ENCODE measurements at regions of chrX and their contacts with region 1.

Region 1: DNA sequence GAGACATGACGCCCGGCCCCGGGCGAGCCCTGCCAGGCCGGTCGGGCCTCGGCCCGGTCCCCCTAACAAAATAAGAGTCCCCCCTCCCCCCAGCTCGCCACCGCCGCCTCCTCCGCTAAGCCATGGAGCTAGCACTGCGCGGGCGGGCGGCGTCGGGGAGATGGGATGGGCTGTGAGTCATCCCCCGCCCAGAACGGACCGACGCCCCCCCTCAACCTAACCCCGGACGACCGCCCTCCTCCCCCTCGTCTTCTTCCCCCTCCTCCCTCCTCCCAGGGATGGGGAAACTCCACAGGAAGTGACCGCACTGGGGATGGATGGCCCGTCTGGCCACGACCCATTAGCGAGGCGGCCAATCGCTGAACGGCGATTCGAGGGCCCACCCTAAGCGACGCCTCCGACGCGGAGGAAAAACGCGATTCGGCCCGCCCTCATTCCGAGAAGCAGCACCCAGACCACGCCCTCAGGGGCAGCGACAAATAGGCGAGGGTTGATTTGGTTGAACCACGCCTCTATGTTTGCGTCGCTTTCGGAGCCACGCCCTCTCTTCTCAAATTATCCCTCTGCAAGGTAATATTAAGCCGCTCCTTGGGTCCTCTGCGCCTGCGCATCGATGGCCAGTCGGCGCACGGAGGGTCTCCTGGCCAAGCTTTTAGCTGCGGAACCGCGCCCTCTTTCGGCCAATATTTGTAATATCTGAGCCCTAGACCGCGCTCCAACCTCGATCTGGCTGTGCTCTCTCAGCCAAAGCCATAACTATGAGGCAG is at the start of gene TFE3:
- DNase-seq: peak; percentile 97
- ATAC-seq: peak; percentile 81
- H3K4me3 Mint-ChIP-seq: peak within 1 kb of the TSS; percentile 88
- H3K27ac Mint-ChIP-seq: peak within 1 kb of the TSS; percentile 97
- H3K4me1 Mint-ChIP-seq: peaks cover 29% of the 10 kb centered on the region
- H3K27me3 Mint-ChIP-seq: no peaks in the 10 kb centered on the region; the same call in 1 of the 2 replicates
- CTCF ChIP-seq: peak; percentile 51
- total RNA-seq, gene TFE3: 46.4 to 51.2 TPM (median 50.0 TPM) in 3 replicates

Region 2: GRCh38 chrX:48957827-48958634 is 85.4 kb before region 1 on chrX:
- CTCF ChIA-PET with region 1: interaction called, 10 read pairs
- POLR2A ChIA-PET with region 1: no interaction called
- DNase-seq: peak; percentile 93
- ATAC-seq: peak; percentile 95
- H3K4me3 Mint-ChIP-seq: peak overlapping the region; percentile 99
- H3K27ac Mint-ChIP-seq: peak overlapping the region; percentile 100
- H3K4me1 Mint-ChIP-seq: peaks cover 11% of the 10 kb centered on the region; the same call in 1 of the 2 replicates
- H3K27me3 Mint-ChIP-seq: no peaks in the 10 kb centered on the region
- CTCF ChIP-seq: no peak

Region 3: DNA sequence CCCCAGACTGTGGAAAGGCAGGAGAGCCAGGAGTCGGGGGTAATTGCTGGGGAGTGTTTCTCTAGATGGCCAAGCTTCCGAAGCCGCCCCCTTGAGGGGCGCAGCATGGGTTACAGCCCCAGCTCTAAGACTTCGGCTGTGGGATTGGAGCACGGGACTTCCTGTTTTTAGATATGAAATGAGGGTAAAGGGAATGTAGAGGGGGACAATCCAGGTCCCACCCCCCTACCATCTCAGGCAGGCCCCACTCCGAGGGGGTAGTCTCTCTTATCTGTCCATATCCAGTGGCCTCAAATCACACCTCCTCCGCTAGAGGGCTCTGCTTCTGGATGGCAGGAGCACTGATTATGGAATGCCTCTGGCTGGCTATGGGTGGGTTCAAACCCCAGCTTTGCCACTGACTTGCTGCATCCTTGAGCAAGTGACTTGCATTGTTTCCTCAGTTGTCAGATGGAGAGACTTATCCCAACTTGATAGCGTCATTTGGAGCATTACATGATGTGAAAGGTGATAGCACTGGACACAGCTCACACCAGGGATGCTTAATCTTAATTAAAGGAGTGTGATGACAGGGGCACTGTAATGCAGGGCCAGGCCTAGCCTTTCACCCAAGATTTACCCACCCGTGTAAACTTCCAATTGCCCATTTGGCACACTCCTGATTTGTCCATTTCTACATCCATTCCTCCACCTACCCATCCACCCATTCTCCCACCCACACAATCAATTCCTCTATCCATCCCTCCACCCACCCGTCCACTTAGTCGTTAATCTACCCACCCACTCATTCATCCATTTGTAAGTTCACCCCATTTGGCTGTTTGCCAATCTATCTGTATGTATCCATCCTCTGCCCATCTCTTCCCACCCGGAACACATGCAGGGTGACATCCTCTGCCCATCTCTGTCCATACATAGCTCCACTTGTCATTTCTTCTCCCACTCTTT is 70.9 kb before region 1 on chrX:
- CTCF ChIA-PET with region 1: interaction called, 14 read pairs
- POLR2A ChIA-PET with region 1: no interaction called
- DNase-seq: peak; percentile 65
- ATAC-seq: peak; percentile 74
- H3K4me3 Mint-ChIP-seq: peak overlapping the region; percentile 78
- H3K27ac Mint-ChIP-seq: peak overlapping the region; percentile 45; the same call in 1 of the 2 replicates
- H3K4me1 Mint-ChIP-seq: 0 out of 2 replicates have a peak, but pooled peaks cover 4% of the 10 kb centered on the region
- H3K27me3 Mint-ChIP-seq: no peaks in the 10 kb centered on the region
- CTCF ChIP-seq: no peak

Region 4: DNA sequence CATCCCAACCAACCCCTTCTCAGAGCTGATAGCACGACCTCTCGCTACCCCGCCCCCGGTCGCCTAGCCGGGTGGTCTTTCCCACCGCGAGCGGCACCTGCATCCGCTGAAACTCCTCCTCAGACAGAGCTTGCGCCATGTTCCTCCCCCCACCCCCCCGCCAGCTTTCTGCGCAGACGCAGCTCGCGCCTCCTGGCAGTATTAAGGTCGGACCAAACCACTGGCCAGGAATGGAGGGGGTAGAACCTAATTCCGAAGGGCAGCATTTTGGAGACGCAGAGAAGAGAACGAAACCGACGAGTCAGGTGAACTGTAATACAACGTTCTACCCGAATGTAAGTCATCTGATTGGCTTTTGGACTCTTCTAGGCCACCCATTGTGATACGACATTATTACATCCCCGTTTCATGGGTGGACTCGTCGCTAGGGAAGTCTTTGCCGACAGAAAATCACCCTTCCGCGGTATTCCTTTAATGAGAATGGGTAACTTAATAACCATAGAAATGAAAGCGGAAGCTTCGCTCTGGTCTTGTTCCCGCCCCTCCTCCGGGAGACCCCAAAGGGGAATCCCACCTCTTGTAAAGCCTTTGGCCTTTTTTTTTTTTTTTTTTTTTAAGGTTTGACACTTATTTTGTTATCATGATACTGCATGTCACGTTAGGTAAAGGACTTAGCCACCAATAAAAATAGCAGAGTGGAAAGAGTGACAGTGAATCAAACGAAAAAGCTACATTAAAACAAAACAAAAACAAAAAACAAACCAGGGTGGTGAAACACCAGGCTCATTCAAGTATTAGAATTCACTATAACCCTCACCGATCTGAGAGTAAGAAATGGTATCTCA is 41.1 kb before region 1 on chrX and contains the start of gene GRIPAP1:
- CTCF ChIA-PET with region 1: interaction called, 6 read pairs
- POLR2A ChIA-PET with region 1: interaction called, 10 read pairs
- DNase-seq: peak; percentile 68
- ATAC-seq: peak; percentile 73
- H3K4me3 Mint-ChIP-seq: peak within 1 kb of the TSS; percentile 99
- H3K27ac Mint-ChIP-seq: peak within 1 kb of the TSS; percentile 99
- H3K4me1 Mint-ChIP-seq: peaks cover 11% of the 10 kb centered on the region
- H3K27me3 Mint-ChIP-seq: no peaks in the 10 kb centered on the region
- CTCF ChIP-seq: no peak
- total RNA-seq, gene GRIPAP1: 60.0 to 70.7 TPM (median 60.9 TPM) in 3 replicates

Measured in WTC11 (cell line).